ENCODE measurements at regions of chr3 and their contacts with region 1.

Region 1: GRCh38 chr3:9396700-9397521 is 504 bp upstream of the SETD5 start:
- DNase-seq: peak; percentile 98
- H3K4me3 Mint-ChIP-seq: peak overlapping the region; percentile 94
- H3K27ac Mint-ChIP-seq: peak overlapping the region; percentile 99
- H3K4me1 Mint-ChIP-seq: peaks cover 63% of the 10 kb centered on the region
- H3K27me3 Mint-ChIP-seq: no peaks in the 10 kb centered on the region

Region 2: DNA sequence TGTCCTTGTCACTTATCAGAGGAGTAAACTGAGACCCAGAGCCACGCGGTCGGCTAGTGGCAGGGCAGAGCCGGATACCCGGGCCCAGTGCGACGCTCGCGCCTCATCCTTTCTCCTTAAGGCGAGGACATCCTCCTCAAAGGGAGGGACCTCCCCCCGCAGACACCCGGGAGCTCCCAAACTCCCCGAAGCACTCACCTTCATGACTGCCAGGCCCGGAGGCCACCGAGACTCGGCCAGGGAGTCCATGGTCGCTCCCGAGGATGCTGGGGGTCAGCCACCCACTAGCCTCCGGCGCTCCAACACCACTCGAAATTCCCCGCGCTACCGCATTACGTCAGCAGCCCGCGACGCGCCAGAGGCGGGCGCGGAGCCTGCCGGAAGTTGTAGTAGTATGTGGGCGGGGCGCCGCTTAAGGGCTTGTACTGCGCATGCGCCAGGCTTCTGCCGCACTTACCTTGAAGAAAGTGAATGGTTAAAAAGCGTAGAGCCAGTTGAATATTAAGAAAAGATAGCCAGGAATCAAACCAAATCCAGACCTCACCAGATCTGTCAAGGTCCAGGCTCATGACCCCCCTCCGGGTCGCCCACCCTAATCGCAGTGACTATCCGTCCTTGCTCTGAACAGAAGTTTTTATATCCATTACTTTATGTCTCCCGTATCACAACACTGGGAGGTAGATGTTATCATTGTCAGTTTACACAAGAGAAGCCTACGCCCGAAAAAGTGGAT is 433.6 kb before region 1 on chr3 and contains the start of gene RAD18:
- CTCF ChIA-PET with region 1: no interaction called
- POLR2A ChIA-PET with region 1: no interaction called
- intact Hi-C with region 1: loop called (anchors 2 kb)
- DNase-seq: peak; percentile 95
- H3K4me3 Mint-ChIP-seq: peak within 1 kb of the TSS; percentile 97
- H3K27ac Mint-ChIP-seq: peak within 1 kb of the TSS; percentile 93
- H3K4me1 Mint-ChIP-seq: peaks cover 27% of the 10 kb centered on the region
- H3K27me3 Mint-ChIP-seq: no peaks in the 10 kb centered on the region
- total RNA-seq, gene RAD18: 38.1 to 41.9 TPM

Region 3: GRCh38 chr3:9409981-9410854 is 13.3 kb after region 1 on chr3:
- CTCF ChIA-PET with region 1: interaction called, 4 read pairs
- POLR2A ChIA-PET with region 1: interaction called, 10 read pairs
- intact Hi-C with region 1: loop called (anchors 1 kb)
- DNase-seq: no peak
- H3K4me3 Mint-ChIP-seq: no peak overlapping the region
- H3K27ac Mint-ChIP-seq: peak overlapping the region; percentile 77
- H3K4me1 Mint-ChIP-seq: peaks cover 60% of the 10 kb centered on the region
- H3K27me3 Mint-ChIP-seq: no peaks in the 10 kb centered on the region

Region 4: DNA sequence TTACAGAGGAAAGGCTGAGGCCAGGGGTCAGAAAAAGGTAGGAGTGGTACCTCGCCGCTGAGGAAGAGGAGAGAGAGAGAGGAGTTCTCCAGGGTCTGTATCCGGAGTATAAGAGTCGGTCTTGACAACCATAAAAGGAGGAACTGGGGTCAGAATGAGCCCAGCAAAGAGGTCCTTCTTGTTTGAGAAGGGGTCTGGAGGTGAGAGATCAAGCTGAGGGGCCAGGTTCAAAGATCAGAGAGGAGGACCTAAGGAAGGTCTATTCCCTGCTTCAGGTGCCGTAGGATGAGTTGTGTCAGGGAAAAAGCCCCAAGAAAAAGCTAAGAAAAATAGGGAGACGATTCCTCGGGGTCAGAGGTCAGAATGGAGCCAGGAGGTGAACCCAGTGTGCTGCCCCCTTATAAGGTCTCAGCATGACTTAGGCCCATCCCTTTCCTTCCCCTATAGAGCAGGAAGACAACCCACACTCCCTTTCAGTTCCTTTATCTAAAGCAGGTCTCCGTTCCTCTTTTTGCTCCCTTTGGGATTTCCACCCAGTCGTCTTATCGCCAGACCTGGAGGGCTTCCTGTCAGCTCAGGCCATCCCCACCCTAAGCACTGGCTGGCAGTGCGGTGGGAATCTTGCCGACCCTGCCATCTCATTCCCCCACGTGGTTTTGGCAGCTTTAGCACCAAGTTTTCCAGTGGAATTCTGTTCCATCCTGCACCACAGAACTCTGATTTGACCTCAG is 253.0 kb after region 1 on chr3:
- CTCF ChIA-PET with region 1: no interaction called
- POLR2A ChIA-PET with region 1: interaction called, 3 read pairs
- intact Hi-C with region 1: loop called (anchors 1 kb)
- DNase-seq: no peak
- H3K4me3 Mint-ChIP-seq: peak overlapping the region; percentile 95
- H3K27ac Mint-ChIP-seq: peak overlapping the region; percentile 73
- H3K4me1 Mint-ChIP-seq: peaks cover 29% of the 10 kb centered on the region
- H3K27me3 Mint-ChIP-seq: no peaks in the 10 kb centered on the region

Region 5: DNA sequence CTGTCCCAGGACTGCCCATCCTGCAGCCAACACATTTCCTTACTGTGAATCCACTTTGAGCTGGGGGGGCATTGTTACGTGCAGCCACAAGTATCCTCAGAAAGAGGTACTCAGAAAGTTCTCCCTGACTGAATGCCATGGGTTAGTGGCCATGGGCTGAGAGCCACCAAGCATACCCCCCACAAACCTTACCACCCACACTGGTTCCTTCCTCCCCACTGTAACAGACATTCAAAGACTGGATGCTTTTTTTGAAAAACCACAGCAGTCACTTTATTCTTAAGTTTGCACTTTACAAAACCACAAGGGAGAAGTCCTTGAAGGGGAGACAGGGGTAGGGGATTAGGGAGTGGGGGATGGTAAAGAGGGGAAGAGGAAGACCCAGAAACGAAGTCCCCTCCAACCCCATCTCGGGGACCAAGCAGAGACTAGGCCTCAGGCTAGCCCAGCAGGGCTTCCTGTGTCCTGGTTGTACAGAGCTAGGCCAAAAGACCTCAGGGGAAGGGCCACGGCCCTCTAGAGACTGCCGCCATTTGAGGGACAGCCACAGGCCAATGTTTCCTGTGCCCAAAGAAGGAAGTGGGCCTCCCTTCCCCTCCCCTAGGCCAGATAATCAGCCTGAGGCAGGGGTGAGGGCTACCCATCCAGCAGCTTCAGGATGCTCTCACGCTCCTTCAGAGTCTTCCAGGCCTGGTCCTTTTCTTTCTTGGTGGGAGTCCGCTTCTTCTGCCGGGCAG is 383.0 kb after region 1 on chr3:
- CTCF ChIA-PET with region 1: no interaction called
- POLR2A ChIA-PET with region 1: interaction called, 3 read pairs
- intact Hi-C with region 1: loop called (anchors 2 kb)
- DNase-seq: peak; percentile 62
- H3K4me3 Mint-ChIP-seq: peak overlapping the region; percentile 39
- H3K27ac Mint-ChIP-seq: peak overlapping the region; percentile 93
- H3K4me1 Mint-ChIP-seq: peaks cover 62% of the 10 kb centered on the region
- H3K27me3 Mint-ChIP-seq: no peaks in the 10 kb centered on the region

Region 6: DNA sequence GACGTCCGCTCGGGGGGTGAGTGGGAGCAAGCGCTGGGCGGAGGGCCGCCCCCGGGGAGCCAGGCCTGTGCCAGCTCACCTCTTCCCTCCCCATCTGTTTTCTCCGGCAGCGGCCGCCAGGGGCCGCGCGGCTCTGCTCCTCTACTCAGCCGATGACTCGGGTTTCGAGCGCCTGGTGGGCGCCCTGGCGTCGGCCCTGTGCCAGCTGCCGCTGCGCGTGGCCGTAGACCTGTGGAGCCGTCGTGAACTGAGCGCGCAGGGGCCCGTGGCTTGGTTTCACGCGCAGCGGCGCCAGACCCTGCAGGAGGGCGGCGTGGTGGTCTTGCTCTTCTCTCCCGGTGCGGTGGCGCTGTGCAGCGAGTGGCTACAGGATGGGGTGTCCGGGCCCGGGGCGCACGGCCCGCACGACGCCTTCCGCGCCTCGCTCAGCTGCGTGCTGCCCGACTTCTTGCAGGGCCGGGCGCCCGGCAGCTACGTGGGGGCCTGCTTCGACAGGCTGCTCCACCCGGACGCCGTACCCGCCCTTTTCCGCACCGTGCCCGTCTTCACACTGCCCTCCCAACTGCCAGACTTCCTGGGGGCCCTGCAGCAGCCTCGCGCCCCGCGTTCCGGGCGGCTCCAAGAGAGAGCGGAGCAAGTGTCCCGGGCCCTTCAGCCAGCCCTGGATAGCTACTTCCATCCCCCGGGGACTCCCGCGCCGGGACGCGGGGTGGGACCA is 536.1 kb after region 1 on chr3:
- CTCF ChIA-PET with region 1: no interaction called
- POLR2A ChIA-PET with region 1: no interaction called
- intact Hi-C with region 1: loop called (anchors 5 kb)
- DNase-seq: peak; percentile 94
- H3K4me3 Mint-ChIP-seq: peak overlapping the region; percentile 86
- H3K27ac Mint-ChIP-seq: peak overlapping the region; percentile 89
- H3K4me1 Mint-ChIP-seq: peaks cover 28% of the 10 kb centered on the region
- H3K27me3 Mint-ChIP-seq: no peaks in the 10 kb centered on the region

Region 7: GRCh38 chr3:10248184-10249080 is 851.5 kb after region 1 on chr3 and contains the start of gene TATDN2:
- CTCF ChIA-PET with region 1: no interaction called
- POLR2A ChIA-PET with region 1: interaction called, 4 read pairs
- intact Hi-C with region 1: loop called (anchors 2 kb)
- DNase-seq: peak; percentile 97
- H3K4me3 Mint-ChIP-seq: peak within 1 kb of the TSS; percentile 97
- H3K27ac Mint-ChIP-seq: peak within 1 kb of the TSS; percentile 98
- H3K4me1 Mint-ChIP-seq: peaks cover 61% of the 10 kb centered on the region
- H3K27me3 Mint-ChIP-seq: no peaks in the 10 kb centered on the region
- total RNA-seq, gene TATDN2: 36.9 to 39.4 TPM